SK-N-SH (cell line): ENCODE measurements at regions of chr12 and their contacts with region 1.

Region 1: DNA sequence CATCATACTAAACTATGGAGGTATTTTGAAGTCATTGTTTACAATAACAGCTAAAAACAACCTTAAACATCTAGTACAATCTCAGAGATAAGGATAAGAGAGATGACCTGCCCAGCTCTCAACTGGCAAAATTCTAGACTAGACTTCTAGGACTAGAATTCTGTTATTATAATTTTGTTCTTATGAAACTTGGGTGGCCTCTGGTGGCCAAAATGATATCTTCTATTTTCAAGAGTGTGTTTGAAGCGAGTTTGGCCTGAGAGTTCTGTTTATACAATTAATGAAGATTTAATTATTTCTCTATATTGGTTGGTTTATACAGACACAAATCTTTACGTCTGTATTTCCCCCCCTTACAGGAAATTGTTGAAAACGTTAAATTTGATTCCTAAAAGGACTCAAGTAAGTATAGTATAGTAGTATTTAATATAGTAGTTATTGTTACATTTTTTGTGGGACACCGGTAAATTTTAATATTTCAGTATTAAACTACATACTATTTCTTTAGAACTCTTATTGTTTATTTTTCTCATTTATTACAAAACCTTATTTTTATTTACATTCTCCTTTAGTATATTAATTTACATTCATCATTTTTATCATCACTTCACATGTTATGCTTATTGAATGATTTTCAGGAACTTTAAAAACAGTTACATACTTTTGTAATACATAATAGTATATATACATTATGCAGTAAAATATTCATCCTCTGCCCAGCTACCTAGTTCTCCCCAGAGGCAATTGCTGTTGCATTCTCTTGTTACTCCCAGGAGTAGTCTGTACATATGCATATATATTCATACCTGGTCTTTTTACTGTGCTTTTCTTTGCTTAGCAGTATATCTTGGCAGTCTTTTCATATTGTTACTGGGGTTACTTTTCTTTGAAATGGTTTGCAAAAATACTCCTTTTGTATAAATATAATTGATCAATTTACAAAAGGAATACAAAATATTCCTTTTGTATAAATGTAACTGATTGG is 6.6 kb downstream of the PPHLN1 start:
- DNase-seq: peak; percentile 56
- H3K4me3 ChIP-seq: no peak overlapping the region
- H3K27ac ChIP-seq: no peak overlapping the region
- H3K4me1 ChIP-seq: peaks cover 2 to 13% of the 10 kb centered on the region in 2 experiments
- H3K27me3 ChIP-seq: no peaks in the 10 kb centered on the region
- CTCF ChIP-seq: peak; percentile 77
- EP300 ChIP-seq: no peak
- RAD21 ChIP-seq: peak; percentile 83

Region 2: DNA sequence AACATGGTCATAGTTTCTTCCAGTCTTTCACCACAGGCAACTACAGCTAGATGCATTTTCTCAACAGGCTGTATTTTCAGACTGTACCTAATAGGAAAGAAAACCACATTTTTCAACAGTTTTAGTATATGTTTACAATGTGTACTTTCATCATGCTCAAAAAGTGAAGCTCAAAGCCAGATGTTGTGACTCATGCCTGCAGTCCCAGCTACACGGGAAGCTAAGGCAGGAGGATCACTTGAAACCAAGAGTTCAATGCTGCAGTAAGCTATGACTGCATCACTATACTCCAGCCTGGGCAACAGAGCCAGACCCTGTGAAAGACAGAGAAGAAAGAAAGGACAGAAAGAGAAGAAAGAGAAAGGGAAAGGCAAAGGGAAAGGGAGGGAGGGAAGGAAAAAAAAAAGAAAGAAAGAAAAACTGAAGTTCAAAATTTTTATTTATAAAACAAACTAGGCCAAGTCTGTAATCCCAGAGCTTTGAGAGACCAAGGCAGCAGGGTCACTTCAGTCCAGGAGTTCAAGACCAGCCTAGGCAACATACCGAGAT is 213.4 kb before region 1 on chr12:
- CTCF ChIA-PET with region 1: interaction called, 11 read pairs
- POLR2A ChIA-PET with region 1: no interaction called
- DNase-seq: no peak
- H3K4me3 ChIP-seq: no peak overlapping the region
- H3K27ac ChIP-seq: peak overlapping the region in 1 of 2 experiments; percentile 28; a peak in 2 of 4 replicates
- H3K4me1 ChIP-seq: no peaks in the 10 kb centered on the region; a peak in 1 of 4 replicates
- H3K27me3 ChIP-seq: no peaks in the 10 kb centered on the region
- CTCF ChIP-seq: no peak
- EP300 ChIP-seq: no peak
- RAD21 ChIP-seq: no peak

Region 3: DNA sequence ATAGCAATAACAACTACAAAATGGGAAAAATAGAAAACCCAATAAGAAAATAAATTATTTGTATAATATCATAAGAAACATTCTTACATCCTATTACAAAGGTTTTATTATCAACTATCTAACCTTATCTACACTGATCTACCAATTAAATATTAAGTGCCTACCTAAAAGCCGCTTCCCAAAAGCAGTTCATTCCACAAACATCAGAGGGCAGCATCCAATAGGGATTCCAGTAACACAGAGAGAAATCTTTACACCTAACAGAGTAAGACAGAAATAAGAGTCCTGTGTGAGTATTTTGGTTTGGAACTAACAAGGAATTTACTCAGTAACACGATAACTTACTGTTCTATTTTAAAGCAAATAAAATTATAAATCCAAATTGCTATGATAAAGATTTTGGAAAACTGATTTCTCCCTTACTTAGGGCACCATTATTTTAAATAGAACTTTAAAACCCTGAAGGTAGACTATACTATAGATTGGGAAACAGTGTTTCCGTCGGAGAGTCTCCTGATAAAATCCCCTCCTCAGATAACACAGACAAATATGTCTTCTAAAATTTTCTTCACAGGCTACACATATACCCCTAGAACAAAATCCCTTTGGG is 202.9 kb before region 1 on chr12:
- CTCF ChIA-PET with region 1: interaction called, 27 read pairs
- POLR2A ChIA-PET with region 1: no interaction called
- DNase-seq: peak; percentile 54
- H3K4me3 ChIP-seq: no peak overlapping the region; a peak in 1 of 4 replicates
- H3K27ac ChIP-seq: no peak overlapping the region
- H3K4me1 ChIP-seq: peaks cover 8 to 19% of the 10 kb centered on the region in 2 experiments; a peak in 3 of 4 replicates
- H3K27me3 ChIP-seq: no peaks in the 10 kb centered on the region
- CTCF ChIP-seq: peak; percentile 96
- EP300 ChIP-seq: no peak
- RAD21 ChIP-seq: peak; percentile 98

Region 4: DNA sequence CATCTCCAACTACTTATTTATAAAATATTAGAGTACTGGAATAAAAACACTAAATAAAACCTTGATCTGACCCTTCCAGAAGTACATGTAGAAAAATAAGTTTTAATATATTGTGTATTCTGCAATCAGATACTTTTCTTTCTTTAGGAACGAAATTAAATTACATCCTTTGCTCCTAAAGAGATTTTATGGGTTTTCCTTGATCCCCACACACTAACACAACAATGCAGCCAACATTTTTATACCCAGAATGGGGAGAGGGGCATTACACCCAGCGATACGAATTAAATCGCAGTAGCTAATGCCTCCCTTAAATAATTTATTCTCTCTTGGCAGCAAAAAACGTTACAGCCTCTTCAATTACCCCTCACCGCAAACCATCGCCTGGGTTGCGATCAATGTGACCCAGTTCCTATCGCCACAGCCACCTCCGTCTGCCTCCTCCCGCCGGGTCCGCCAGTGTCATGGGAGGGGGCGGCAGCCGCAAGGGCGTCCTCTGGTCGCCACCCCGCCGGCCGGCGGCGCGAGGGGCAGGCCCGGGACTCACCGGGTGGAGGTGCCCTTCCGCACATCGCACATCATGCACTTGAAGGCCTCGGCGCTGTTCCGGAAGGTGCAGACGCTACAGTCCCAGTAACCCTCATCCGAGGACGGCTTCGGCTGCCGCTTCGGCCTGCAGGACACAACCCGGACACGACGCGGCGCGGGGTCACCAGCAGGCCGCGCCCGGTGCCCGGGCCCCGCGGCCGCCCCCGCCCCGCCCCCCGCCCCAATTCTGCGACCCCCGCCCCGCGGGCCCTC is 95.3 kb before region 1 on chr12:
- CTCF ChIA-PET with region 1: interaction called, 12 read pairs
- POLR2A ChIA-PET with region 1: no interaction called
- DNase-seq: peak; percentile 90
- H3K4me3 ChIP-seq: peak overlapping the region; percentile 87 to 90
- H3K27ac ChIP-seq: peak overlapping the region; percentile 67 to 96
- H3K4me1 ChIP-seq: peaks cover 0 to 17% of the 10 kb centered on the region in 2 experiments; a peak in 3 of 4 replicates
- H3K27me3 ChIP-seq: no peaks in the 10 kb centered on the region
- CTCF ChIP-seq: peak; percentile 52
- EP300 ChIP-seq: no peak
- RAD21 ChIP-seq: peak; percentile 17; the same call in 1 of the 2 replicates

Region 5: DNA sequence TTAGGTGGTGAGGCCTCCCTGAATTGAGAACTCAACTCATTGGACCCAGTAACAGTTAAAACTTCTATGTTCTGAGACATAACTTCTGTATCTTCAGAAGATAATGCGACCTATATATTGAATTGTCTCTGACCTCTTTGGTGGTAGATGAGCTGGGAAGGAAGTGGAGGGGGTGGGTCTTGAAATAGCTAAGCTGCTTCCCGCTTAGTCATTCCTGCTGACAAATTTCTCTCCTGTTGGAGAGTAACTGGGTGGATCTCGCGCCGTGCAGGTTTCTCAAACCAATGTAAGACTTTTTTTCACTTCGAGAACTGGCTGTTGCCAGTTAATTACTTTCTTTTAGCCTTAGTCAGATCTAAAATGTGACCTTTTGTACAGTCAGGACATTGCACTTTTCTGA is 94.2 kb after region 1 on chr12:
- CTCF ChIA-PET with region 1: no interaction called
- POLR2A ChIA-PET with region 1: no interaction called
- DNase-seq: no peak
- H3K4me3 ChIP-seq: no peak overlapping the region
- H3K27ac ChIP-seq: peak overlapping the region in 1 of 2 experiments; percentile 31; a peak in 2 of 4 replicates
- H3K4me1 ChIP-seq: peaks cover 12 to 22% of the 10 kb centered on the region in 2 experiments; a peak in 2 of 4 replicates
- H3K27me3 ChIP-seq: no peaks in the 10 kb centered on the region
- CTCF ChIP-seq: no peak
- EP300 ChIP-seq: no peak
- RAD21 ChIP-seq: no peak